Activated naive CD4-positive, alpha-beta T cell treated with anti-CD3 and anti-CD28 coated beads for 36 hours (primary cell): ENCODE measurements at regions of chr6 and their contacts with region 1.

Region 1: GRCh38 chr6:110873981-110874879 is at the start of gene AMD1:
- DNase-seq: peak; percentile 94
- H3K4me3 Mint-ChIP-seq: peak within 1 kb of the TSS; percentile 95
- H3K27ac Mint-ChIP-seq: peak within 1 kb of the TSS; percentile 95
- H3K4me1 Mint-ChIP-seq: peaks cover 29% of the 10 kb centered on the region
- H3K27me3 Mint-ChIP-seq: no peaks in the 10 kb centered on the region
- total RNA-seq, gene AMD1: 72.6 to 75.3 TPM

Region 2: DNA sequence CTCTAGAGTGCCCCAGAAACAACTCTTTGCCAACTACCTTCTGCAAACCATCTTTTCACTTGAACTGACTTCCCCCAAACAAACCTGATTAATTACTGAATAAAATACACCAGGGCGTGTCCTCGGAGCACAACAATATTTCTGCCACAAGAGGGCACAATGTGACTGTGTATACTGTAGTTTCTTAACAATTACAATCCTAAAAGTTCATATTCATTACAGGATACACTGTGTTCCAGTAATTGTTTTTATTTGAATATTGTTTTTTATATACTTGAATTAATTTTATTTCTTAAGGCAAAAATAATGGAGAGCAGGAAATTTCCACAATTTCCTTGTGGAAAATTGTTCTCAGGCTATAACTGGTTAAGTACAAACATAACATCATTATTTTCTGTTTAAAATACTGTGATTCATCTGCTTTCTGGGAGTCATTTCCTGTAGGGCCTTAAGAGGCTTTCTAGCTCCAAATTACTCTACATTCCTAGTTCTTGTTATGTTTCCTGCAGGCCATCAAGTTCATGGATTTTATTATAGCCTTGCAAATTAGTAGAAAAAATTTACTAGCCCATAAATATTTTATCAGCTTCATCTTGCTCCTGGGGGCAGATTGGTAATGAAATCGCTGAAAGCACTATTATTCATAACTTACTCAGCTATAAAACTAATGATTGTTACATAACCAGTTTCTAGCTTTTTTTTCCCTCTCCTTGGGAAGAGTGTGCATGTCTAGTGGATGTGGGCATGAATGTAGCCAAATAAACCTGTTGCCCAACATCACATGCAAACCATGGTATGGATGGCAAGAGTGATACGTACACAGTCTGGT is 345.9 kb before region 1 on chr6:
- CTCF ChIA-PET with region 1: interaction called, 3 read pairs
- intact Hi-C with region 1: loop called (anchors 2 kb)
- DNase-seq: peak; percentile 75
- H3K4me3 Mint-ChIP-seq: no peak overlapping the region
- H3K27ac Mint-ChIP-seq: no peak overlapping the region
- H3K4me1 Mint-ChIP-seq: no peaks in the 10 kb centered on the region
- H3K27me3 Mint-ChIP-seq: no peaks in the 10 kb centered on the region

Region 3: GRCh38 chr6:110643175-110643574 is 231.1 kb before region 1 on chr6:
- CTCF ChIA-PET with region 1: no interaction called
- intact Hi-C with region 1: no loop called
- DNase-seq: no peak
- H3K4me3 Mint-ChIP-seq: no peak overlapping the region
- H3K27ac Mint-ChIP-seq: no peak overlapping the region
- H3K4me1 Mint-ChIP-seq: no peaks in the 10 kb centered on the region
- H3K27me3 Mint-ChIP-seq: no peaks in the 10 kb centered on the region

Region 4: GRCh38 chr6:110944681-110945151 is 70.5 kb after region 1 on chr6:
- CTCF ChIA-PET with region 1: interaction called, 8 read pairs
- intact Hi-C with region 1: loop called (anchors 1 kb)
- DNase-seq: peak; percentile 67
- H3K4me3 Mint-ChIP-seq: no peak overlapping the region
- H3K27ac Mint-ChIP-seq: peak overlapping the region; percentile 51
- H3K4me1 Mint-ChIP-seq: peaks cover 8% of the 10 kb centered on the region
- H3K27me3 Mint-ChIP-seq: no peaks in the 10 kb centered on the region

Region 5: GRCh38 chr6:110981202-110981600 is 107.0 kb after region 1 on chr6:
- CTCF ChIA-PET with region 1: no interaction called
- intact Hi-C with region 1: loop called (anchors 1 kb)
- DNase-seq: no peak
- H3K4me3 Mint-ChIP-seq: peak overlapping the region; percentile 96
- H3K27ac Mint-ChIP-seq: peak overlapping the region; percentile 96
- H3K4me1 Mint-ChIP-seq: peaks cover 38% of the 10 kb centered on the region
- H3K27me3 Mint-ChIP-seq: no peaks in the 10 kb centered on the region

Region 6: DNA sequence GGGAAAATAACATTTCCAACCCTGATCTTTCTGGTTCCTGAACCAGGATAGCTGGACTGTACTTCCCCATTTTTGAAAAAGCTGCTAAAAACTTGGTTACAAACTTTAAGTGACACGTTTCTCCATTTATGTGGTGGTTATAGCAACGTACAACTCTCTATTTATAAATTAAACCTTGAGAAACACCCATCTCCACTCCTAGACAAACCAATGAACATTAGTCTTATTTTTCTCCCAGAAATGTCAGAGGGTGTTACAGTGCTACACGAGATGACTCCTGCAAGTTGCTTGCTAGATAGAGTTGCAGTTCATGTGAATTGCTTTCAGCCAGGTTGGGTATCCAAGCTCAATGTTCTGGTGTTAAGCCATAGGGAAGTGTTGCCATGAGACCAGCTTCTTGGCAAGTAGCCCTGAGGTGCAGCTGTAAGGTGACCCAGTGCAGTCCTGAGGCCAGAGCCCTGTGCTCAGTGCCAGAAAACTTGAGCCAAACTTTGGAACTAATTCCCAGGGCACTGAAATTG is 660.1 kb after region 1 on chr6:
- CTCF ChIA-PET with region 1: no interaction called
- intact Hi-C with region 1: loop called (anchors 5 kb)
- DNase-seq: no peak
- H3K4me3 Mint-ChIP-seq: no peak overlapping the region
- H3K27ac Mint-ChIP-seq: no peak overlapping the region
- H3K4me1 Mint-ChIP-seq: peaks cover 30% of the 10 kb centered on the region
- H3K27me3 Mint-ChIP-seq: no peaks in the 10 kb centered on the region

Region 7: GRCh38 chr6:111552241-111552744 is 678.1 kb after region 1 on chr6:
- CTCF ChIA-PET with region 1: no interaction called
- intact Hi-C with region 1: no loop called
- DNase-seq: no peak
- H3K4me3 Mint-ChIP-seq: no peak overlapping the region
- H3K27ac Mint-ChIP-seq: no peak overlapping the region
- H3K4me1 Mint-ChIP-seq: no peaks in the 10 kb centered on the region
- H3K27me3 Mint-ChIP-seq: no peaks in the 10 kb centered on the region